Activated CD4-positive, alpha-beta T cell treated with anti-CD3 and anti-CD28 coated beads, Interleukin-2, amount 10 ng/mL, durations not matched to agents 24 days and 14 days (primary cell): ENCODE measurements at regions of chr14 and their contacts with region 1.

Region 1: GRCh38 chr14:73058224-73058921 is at the start of gene RBM25:
- DNase-seq: peak; percentile 98
- H3K4me3 Mint-ChIP-seq: no peak within 1 kb of the TSS
- H3K27ac Mint-ChIP-seq: no peak within 1 kb of the TSS
- H3K4me1 Mint-ChIP-seq: peaks cover 19% of the 10 kb centered on the region
- H3K27me3 Mint-ChIP-seq: peaks cover 2% of the 10 kb centered on the region
- total RNA-seq, gene RBM25: 127 and 131 TPM in 2 replicates

Region 2: GRCh38 chr14:72476657-72477499 is 581.5 kb before region 1 on chr14:
- intact Hi-C with region 1: loop called (anchors 1 kb)
- DNase-seq: peak; percentile 95
- H3K4me3 Mint-ChIP-seq: peak overlapping the region; percentile 61
- H3K27ac Mint-ChIP-seq: peak overlapping the region; percentile 83
- H3K4me1 Mint-ChIP-seq: peaks cover 65% of the 10 kb centered on the region
- H3K27me3 Mint-ChIP-seq: no peaks in the 10 kb centered on the region

Region 3: GRCh38 chr14:72926292-72927028 is 131.9 kb before region 1 on chr14 and contains the start of gene DCAF4:
- intact Hi-C with region 1: loop called (anchors 1 kb)
- DNase-seq: peak; percentile 98
- H3K4me3 Mint-ChIP-seq: peak within 1 kb of the TSS; percentile 87
- H3K27ac Mint-ChIP-seq: peak within 1 kb of the TSS; percentile 93
- H3K4me1 Mint-ChIP-seq: peaks cover 11% of the 10 kb centered on the region
- H3K27me3 Mint-ChIP-seq: peaks cover 13% of the 10 kb centered on the region
- total RNA-seq, gene DCAF4: 20.2 and 21.6 TPM in 2 replicates

Region 4: DNA sequence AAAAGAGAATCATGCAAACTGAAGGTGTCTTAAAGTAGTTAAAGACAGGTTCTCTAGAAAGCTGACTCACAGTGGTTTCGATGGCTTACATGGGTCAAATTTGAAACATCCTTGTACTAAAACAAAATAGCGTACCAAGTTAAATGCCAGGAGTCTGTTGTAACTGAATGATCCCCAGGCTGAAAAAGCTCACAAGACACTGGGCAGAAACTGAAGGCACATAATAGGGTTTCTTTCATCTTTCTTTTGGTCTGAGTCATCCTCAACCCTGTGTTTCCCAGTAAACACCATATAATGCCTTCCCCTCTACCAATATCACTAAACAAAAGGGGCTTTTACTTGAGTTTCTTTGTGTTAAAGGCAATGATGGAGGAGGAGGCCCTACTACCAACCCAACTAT is 44.3 kb before region 1 on chr14:
- intact Hi-C with region 1: loop called (anchors 1 kb)
- DNase-seq: peak; percentile 61
- H3K4me3 Mint-ChIP-seq: no peak overlapping the region
- H3K27ac Mint-ChIP-seq: peak overlapping the region; percentile 70
- H3K4me1 Mint-ChIP-seq: peaks cover 24% of the 10 kb centered on the region
- H3K27me3 Mint-ChIP-seq: no peaks in the 10 kb centered on the region

Region 5: GRCh38 chr14:73026845-73027542 is 31.4 kb before region 1 on chr14 and contains the start of gene ZFYVE1:
- intact Hi-C with region 1: loop called (anchors 1 kb)
- DNase-seq: peak; percentile 97
- H3K4me3 Mint-ChIP-seq: peak within 1 kb of the TSS; percentile 95
- H3K27ac Mint-ChIP-seq: peak within 1 kb of the TSS; percentile 90
- H3K4me1 Mint-ChIP-seq: peaks cover 35% of the 10 kb centered on the region
- H3K27me3 Mint-ChIP-seq: no peaks in the 10 kb centered on the region
- total RNA-seq, gene ZFYVE1: 7.4 and 9.1 TPM in 2 replicates

Region 6: DNA sequence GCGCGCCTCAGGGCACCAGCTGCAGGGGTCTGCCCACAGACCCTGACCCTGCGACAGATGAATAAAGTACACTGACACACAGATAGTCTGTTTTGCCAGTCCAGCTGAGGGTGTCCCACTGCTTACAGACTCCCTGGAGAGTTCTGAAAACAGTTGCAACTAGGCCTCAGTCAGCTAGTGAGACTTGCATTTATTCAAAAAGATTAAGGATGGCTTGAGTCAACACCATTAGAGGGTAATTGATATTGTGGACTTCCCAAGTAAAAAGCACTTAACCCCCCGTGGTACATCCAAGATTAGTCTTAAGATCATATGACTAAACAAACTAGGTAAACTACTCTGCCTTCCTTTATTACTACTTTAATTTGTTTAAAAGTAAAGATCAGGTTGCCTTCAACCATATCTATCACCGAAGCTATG is 66.8 kb after region 1 on chr14:
- intact Hi-C with region 1: no loop called
- DNase-seq: no peak
- H3K4me3 Mint-ChIP-seq: no peak overlapping the region
- H3K27ac Mint-ChIP-seq: no peak overlapping the region
- H3K4me1 Mint-ChIP-seq: no peaks in the 10 kb centered on the region
- H3K27me3 Mint-ChIP-seq: no peaks in the 10 kb centered on the region

Region 7: DNA sequence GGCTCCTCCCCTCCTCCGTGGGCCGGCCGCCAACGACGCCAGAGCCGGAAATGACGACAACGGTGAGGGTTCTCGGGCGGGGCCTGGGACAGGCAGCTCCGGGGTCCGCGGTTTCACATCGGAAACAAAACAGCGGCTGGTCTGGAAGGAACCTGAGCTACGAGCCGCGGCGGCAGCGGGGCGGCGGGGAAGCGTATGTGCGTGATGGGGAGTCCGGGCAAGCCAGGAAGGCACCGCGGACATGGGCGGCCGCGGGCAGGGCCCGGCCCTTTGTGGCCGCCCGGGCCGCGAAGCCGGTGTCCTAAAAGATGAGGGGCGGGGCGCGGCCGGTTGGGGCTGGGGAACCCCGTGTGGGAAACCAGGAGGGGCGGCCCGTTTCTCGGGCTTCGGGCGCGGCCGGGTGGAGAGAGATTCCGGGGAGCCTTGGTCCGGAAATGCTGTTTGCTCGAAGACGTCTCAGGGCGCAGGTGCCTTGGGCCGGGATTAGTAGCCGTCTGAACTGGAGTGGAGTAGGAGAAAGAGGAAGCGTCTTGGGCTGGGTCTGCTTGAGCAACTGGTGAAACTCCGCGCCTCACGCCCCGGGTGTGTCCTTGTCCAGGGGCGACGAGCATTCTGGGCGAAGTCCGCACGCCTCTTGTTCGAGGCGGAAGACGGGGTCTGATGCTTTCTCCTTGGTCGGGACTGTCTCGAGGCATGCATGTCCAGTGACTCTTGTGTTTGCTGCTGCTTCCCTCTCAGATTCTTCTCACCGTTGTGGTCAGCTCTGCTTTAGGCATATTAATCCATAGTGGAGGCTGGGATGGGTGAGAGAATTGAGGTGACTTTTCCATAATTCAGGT is 78.2 kb after region 1 on chr14 and contains the start of gene PSEN1:
- intact Hi-C with region 1: loop called (anchors 1 kb)
- DNase-seq: peak; percentile 100
- H3K4me3 Mint-ChIP-seq: peak within 1 kb of the TSS; percentile 93
- H3K27ac Mint-ChIP-seq: peak within 1 kb of the TSS; percentile 99
- H3K4me1 Mint-ChIP-seq: peaks cover 27% of the 10 kb centered on the region
- H3K27me3 Mint-ChIP-seq: no peaks in the 10 kb centered on the region
- total RNA-seq, gene PSEN1: 34.1 and 39.1 TPM in 2 replicates